Psoas muscle (tissue), 8 donors: ENCODE measurements at regions of chr16 and their contacts with region 1.

Region 1: DNA sequence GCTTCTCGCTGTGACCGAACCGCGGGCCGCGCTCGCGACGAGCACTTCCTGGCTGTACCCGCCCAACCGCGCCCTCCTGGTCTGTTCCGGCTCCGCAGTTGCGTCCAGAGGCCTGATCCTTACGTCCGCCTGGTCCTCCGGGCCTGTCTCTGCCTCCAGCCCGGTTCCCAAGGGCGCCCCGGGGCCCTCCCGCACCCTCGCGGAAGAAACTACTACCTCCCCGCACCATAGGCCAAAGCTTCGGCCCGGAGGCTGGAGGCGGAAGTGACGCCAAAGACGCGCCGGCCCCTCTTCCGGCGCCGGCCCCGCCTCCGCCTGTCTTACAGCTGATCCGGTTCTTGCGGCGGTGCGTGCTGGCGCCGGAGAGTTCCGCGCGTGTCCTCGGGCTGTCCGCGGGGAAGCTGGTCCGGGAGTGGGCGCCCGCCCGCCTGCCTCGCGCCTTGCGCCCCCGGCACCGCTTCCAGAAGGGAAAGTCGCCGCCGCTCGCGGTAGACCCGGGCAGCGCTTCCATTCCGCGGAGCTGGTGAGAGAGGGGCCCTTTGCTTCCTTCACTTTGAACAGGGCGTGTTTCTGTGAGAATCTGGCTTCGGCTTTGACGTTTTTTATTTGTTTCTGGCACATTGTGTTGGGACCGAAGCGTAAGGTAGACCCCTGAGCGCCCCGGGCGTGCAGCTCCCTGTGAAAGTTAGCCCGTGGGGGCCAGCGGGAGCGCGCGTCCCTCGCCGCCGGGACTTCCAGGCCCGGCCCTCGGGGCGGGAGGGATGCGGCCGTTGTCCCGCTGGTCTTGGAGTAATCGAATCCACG is at the start of gene ZNF778:
- DNase-seq: peak; percentile 85 to 92
- ATAC-seq: peak; percentile 91 to 94 (median 92)
- H3K4me3 ChIP-seq: peak within 1 kb of the TSS; percentile 81
- H3K27ac ChIP-seq: peak within 1 kb of the TSS; percentile 96
- H3K4me1 ChIP-seq: peaks cover 32% of the 10 kb centered on the region
- H3K27me3 ChIP-seq: no peaks in the 10 kb centered on the region
- CTCF ChIP-seq: peak; percentile 10
- total RNA-seq, gene ZNF778: 10.2 to 15.3 (median 12.4) TPM

Region 2: GRCh38 chr16:88941913-88942909 is 275.4 kb before region 1 on chr16:
- intact Hi-C with region 1: loop called (anchors 5 kb)
- DNase-seq: peak; percentile 55 to 76
- ATAC-seq: peak; percentile 55 to 79 (median 72)
- H3K4me3 ChIP-seq: peak overlapping the region; percentile 57
- H3K27ac ChIP-seq: no peak overlapping the region
- H3K4me1 ChIP-seq: peaks cover 10% of the 10 kb centered on the region
- H3K27me3 ChIP-seq: peaks cover 0 to 34% (median 5%) of the 10 kb centered on the region in 3 donors
- CTCF ChIP-seq: peak; percentile 78

Region 3: GRCh38 chr16:89093602-89094251 is 123.9 kb before region 1 on chr16 and contains the start of gene ACSF3:
- intact Hi-C with region 1: loop called in 1 of 2 experiments (anchors 10 kb)
- DNase-seq: peak; percentile 74 to 83
- ATAC-seq: peak; percentile 83 to 95 (median 94)
- H3K4me3 ChIP-seq: peak within 1 kb of the TSS; percentile 95
- H3K27ac ChIP-seq: peak within 1 kb of the TSS; percentile 72
- H3K4me1 ChIP-seq: peaks cover 16% of the 10 kb centered on the region
- H3K27me3 ChIP-seq: peaks cover 0 to 9% (median 3%) of the 10 kb centered on the region in 3 donors
- CTCF ChIP-seq: no peak
- total RNA-seq, gene ACSF3: 16.2 to 26.5 (median 19.1) TPM

Region 4: DNA sequence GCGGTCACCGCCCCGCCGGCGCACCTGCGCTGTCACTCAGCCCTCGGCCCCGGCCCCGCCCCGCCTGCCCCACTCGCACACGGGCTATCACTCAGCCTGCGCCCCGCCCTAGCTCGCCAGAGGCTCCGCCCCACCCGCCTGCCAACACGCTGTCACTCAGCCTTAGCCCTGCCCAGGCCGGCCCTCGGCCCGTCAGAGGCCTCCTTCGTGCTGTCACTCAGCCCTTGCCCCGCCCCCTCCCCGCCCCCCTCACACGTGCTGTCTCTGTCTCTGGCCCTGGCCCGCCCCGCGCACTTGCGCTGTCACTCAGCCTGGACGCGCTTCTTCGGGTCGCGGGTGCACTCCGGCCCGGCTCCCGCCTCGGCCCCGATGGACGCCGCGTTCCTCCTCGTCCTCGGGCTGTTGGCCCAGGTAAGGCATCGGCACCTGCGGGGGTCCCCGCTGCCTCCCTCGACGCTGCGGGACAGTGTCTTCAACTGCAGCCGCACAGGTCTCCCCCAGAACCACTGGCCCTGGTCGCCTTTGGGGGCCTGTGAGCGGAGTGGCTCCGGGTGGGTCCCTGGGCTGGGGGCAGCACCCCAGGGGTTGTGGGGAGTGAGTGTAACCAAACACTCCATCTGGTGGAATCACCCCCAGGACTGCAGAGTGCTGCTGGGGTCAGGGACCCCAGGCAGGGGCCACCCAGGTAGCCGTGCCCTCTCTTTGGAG is 46.0 kb before region 1 on chr16 and contains the start of gene CDH15:
- intact Hi-C with region 1: loop called in 1 of 2 experiments (anchors 5 kb)
- DNase-seq: peak; percentile 94 to 99
- ATAC-seq: peak; percentile 86 to 91 (median 88)
- H3K4me3 ChIP-seq: peak within 1 kb of the TSS; percentile 87
- H3K27ac ChIP-seq: peak within 1 kb of the TSS; percentile 95
- H3K4me1 ChIP-seq: peaks cover 43% of the 10 kb centered on the region
- H3K27me3 ChIP-seq: peaks cover 0 to 16% (median 0%) of the 10 kb centered on the region in 3 donors
- CTCF ChIP-seq: no peak
- total RNA-seq, gene CDH15: 36.7 to 62.8 (median 51.1) TPM

Region 5: GRCh38 chr16:89268987-89269735 is 51.6 kb after region 1 on chr16:
- intact Hi-C with region 1: no loop called
- DNase-seq: peak in 1 of 2 donors; percentile 53
- ATAC-seq: peak in 2 of 4 donors; percentile 43 to 59
- H3K4me3 ChIP-seq: no peak overlapping the region
- H3K27ac ChIP-seq: no peak overlapping the region
- H3K4me1 ChIP-seq: no peaks in the 10 kb centered on the region
- H3K27me3 ChIP-seq: no peaks in the 10 kb centered on the region
- CTCF ChIP-seq: no peak

Region 6: GRCh38 chr16:89363621-89364393 is 146.2 kb after region 1 on chr16:
- intact Hi-C with region 1: no loop called
- DNase-seq: peak in 1 of 2 donors; percentile 54
- ATAC-seq: peak; percentile 58 to 62 (median 60)
- H3K4me3 ChIP-seq: no peak overlapping the region
- H3K27ac ChIP-seq: peak overlapping the region; percentile 46
- H3K4me1 ChIP-seq: peaks cover 77% of the 10 kb centered on the region
- H3K27me3 ChIP-seq: no peaks in the 10 kb centered on the region
- CTCF ChIP-seq: no peak